ENCODE measurements at regions of chr7 and their contacts with region 1.

Region 1: DNA sequence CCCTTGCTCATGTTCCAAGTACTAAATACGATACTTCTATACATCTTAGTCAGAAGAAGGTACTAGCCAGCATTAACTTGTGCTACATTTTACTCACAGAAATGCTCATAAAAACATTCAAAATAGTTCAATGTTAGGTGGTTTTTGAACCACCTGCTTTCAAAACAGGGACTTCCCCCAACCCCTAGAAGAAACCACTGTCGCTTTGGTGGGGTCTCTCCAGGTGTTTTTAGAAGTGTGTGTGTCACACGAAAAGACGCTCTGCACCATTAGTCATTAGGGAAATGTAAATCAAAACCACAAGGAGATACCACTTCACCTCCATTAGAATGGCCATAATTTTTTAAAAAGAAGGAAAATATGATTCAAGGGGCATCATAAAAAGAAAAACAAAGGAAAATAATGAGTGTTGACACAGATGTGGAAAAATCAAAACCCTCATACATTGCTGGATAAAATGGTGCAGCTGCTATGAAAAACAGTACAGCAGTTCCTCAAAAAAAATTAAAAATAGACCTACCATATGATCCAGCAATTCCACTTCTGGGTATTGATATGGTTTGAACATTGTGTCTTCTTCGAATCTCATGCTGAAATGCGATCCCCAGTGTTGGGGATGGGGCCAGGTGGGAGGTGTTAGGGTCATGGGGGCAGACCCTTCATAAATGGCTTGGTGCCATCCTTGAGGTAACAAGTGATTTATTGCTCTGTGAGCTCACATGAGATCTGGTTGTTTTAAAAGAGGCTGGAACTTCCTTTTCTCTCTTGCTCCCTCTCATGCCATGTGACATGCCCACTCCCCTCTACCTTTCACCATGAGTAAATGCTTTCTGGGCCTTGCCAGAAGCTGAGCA is 74.2 kb downstream of the MALSU1 start:
- DNase-seq: peak; percentile 88
- H3K4me3 Mint-ChIP-seq: no peak overlapping the region
- H3K27ac Mint-ChIP-seq: peak overlapping the region; percentile 83
- H3K4me1 Mint-ChIP-seq: peaks cover 48% of the 10 kb centered on the region
- H3K27me3 Mint-ChIP-seq: peaks cover 6% of the 10 kb centered on the region

Region 2: DNA sequence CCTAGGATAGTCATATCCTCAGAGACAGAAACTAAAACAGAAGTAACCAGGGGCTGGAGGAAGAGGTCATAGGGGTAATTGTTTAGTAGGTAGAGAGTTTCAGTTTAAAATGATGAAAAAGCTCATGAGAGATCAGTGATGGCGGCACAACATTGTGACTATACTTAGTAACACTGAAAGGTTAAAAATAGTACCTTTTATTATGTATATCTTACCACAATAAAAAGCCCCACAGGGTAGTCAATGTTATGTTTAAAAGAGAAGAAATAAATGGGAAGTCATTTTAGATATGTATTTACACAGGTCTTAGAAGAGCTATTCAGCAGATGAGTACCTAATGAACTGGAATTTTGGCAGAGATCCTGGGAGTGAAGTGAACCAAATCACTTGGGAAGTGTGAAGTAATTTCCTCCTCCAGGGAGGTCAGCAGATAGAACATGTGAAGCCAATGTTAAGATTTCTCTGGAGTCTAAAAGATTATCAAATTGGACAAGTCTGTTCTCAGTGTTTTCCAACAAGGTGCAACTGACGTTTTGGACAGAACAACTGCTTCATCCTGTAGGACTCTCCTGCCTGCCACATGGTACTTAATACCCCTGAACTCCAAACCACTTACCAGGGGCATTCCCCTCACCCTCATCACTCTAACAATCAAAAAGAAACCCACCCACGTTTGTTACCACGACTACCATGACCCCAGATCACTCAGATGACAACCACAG is 1434.1 kb before region 1 on chr7:
- CTCF ChIA-PET with region 1: no interaction called
- intact Hi-C with region 1: loop called (anchors 10 kb)
- DNase-seq: peak; percentile 84
- H3K4me3 Mint-ChIP-seq: peak overlapping the region; percentile 13
- H3K27ac Mint-ChIP-seq: peak overlapping the region; percentile 77
- H3K4me1 Mint-ChIP-seq: peaks cover 72% of the 10 kb centered on the region
- H3K27me3 Mint-ChIP-seq: no peaks in the 10 kb centered on the region

Region 3: GRCh38 chr7:22885797-22886261 is 487.5 kb before region 1 on chr7:
- CTCF ChIA-PET with region 1: no interaction called
- intact Hi-C with region 1: loop called (anchors 1 kb)
- DNase-seq: peak; percentile 88
- H3K4me3 Mint-ChIP-seq: peak overlapping the region; percentile 64
- H3K27ac Mint-ChIP-seq: peak overlapping the region; percentile 98
- H3K4me1 Mint-ChIP-seq: peaks cover 54% of the 10 kb centered on the region
- H3K27me3 Mint-ChIP-seq: no peaks in the 10 kb centered on the region

Region 4: DNA sequence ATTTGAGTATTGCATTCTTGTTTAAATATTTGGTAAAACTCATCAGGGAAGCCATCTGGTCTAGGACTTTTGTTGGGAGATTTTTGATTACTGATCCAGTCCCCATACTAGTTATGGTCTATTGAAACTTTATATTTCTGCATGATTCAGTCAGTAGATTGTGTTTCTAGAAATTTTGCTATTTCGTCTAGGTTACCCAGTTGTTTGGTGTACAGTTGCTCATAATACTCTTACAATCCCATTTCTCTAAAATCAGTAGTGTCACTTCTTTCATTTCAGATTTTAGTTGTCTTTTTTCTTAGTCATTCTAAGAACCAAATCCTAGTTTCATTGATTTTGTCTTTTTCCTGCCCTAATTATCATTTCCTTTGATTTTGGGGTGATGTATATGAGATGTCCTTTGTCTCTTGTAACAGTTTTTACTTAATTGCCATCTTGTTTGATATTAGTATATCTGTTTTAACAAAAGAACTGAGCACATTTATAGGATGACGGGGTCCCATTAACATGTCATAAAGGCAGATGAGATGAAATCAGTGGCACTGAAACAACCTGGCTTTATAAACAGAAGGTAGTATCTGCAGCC is 66.3 kb before region 1 on chr7:
- CTCF ChIA-PET with region 1: no interaction called
- intact Hi-C with region 1: loop called (anchors 1 kb)
- DNase-seq: no peak
- H3K4me3 Mint-ChIP-seq: no peak overlapping the region
- H3K27ac Mint-ChIP-seq: peak overlapping the region; percentile 30
- H3K4me1 Mint-ChIP-seq: peaks cover 49% of the 10 kb centered on the region
- H3K27me3 Mint-ChIP-seq: no peaks in the 10 kb centered on the region

Region 5: GRCh38 chr7:23394488-23395171 is 21.3 kb after region 1 on chr7:
- CTCF ChIA-PET with region 1: no interaction called
- intact Hi-C with region 1: loop called (anchors 1 kb)
- DNase-seq: no peak
- H3K4me3 Mint-ChIP-seq: no peak overlapping the region
- H3K27ac Mint-ChIP-seq: no peak overlapping the region
- H3K4me1 Mint-ChIP-seq: peaks cover 15% of the 10 kb centered on the region
- H3K27me3 Mint-ChIP-seq: no peaks in the 10 kb centered on the region

Region 6: GRCh38 chr7:23531794-23532489 is 158.6 kb after region 1 on chr7 and contains the start of gene TRA2A:
- CTCF ChIA-PET with region 1: no interaction called
- intact Hi-C with region 1: loop called (anchors 1 kb)
- DNase-seq: peak; percentile 99
- H3K4me3 Mint-ChIP-seq: peak within 1 kb of the TSS; percentile 99
- H3K27ac Mint-ChIP-seq: peak within 1 kb of the TSS; percentile 100
- H3K4me1 Mint-ChIP-seq: peaks cover 43% of the 10 kb centered on the region
- H3K27me3 Mint-ChIP-seq: no peaks in the 10 kb centered on the region
- total RNA-seq, gene TRA2A: 77.8 to 79.0 TPM

Region 7: DNA sequence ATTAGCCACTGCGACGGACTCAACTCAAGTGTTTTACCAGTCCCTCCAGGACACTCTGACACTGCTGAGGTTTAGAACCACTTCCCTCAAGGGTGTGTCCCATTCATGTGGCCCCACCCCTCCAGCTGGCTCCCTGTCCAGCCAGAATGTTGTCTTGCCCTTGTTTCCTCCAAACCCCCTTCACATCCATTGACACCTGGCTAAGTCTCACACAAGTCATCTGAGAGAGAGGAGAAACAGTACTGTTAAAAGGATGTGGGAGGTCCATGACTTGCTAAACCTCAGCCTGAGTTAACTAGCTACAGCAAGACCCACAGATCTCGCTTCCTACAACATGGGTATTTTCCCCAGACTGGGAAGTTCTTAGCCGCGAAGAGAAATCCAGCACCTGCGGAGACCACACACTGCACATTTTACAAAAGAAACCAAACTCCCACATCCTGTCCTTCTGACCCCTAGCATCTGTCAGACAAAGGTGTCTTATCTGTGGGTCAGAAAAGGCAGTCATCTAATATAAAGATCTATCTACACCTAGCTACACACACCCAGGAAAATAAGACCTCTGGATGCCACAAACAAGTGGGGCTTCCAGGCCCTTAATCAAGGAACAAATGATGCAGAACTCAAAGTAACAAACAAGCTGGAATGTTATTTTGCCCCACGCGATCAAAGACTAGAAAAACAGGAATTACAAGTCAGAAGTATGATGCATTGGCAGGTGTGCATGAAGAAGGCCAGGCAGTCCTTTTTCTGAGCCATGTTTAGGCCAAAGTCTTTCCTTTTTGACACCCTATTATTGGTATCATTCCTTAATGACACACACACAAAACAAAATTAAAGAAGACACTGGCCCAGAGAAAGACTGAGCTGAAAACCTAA is 1592.7 kb after region 1 on chr7:
- CTCF ChIA-PET with region 1: no interaction called
- intact Hi-C with region 1: loop called (anchors 10 kb)
- DNase-seq: peak; percentile 68
- H3K4me3 Mint-ChIP-seq: peak overlapping the region; percentile 17
- H3K27ac Mint-ChIP-seq: peak overlapping the region; percentile 77
- H3K4me1 Mint-ChIP-seq: peaks cover 77% of the 10 kb centered on the region
- H3K27me3 Mint-ChIP-seq: no peaks in the 10 kb centered on the region

Measured in activated naive CD4-positive, alpha-beta T cell treated with anti-CD3 and anti-CD28 coated beads for 36 hours (primary cell).